Dorsolateral prefrontal cortex (tissue), 120 donors: ENCODE measurements at regions of chr10 and their contacts with region 1.

Region 1: DNA sequence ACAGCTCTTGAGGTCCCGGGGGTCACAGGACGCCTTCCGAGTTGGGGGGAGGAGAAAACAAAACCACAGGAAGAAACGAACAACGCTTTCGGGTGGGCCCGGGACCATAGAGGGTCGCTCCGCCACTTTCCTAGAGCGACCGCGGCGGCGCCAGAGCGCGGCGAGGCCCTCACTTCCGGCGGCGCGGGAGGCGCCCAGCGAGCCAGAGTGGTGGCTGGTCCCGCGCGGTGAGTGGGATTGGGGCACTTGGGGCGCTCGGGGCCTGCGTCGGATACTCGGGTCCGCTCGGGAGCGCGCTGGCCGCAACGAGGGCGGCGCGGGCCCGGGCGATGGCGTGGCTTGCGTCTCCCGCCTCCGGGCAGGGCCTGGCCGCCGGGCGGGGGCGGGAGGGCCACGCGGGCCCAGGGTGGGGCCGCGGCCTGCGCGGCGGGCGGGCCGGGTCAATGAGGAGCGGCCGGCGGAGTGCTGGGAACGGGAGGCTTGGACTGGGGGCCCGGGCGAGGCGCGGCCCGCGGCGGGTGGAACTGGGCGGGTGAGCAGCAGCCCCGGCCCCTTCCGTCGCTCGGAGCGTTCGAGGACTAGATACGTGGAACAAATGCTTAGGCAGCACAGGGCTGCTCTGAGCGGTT is at the start of gene ZNF22:
- DNase-seq: peak in 6 of 10 donors; percentile 58 to 82 (median 68)
- H3K4me3 ChIP-seq: peak within 1 kb of the TSS; percentile 48 to 84 (median 74)
- H3K27ac ChIP-seq: peak within 1 kb of the TSS; percentile 39 to 98 (median 88)
- H3K27me3 ChIP-seq: no peaks in the 10 kb centered on the region
- CTCF ChIP-seq: peak in 35 of 56 donors; percentile 12 to 46 (median 29)
- total RNA-seq, gene ZNF22: 9.2 to 20.9 (median 14.1) TPM

Region 2: DNA sequence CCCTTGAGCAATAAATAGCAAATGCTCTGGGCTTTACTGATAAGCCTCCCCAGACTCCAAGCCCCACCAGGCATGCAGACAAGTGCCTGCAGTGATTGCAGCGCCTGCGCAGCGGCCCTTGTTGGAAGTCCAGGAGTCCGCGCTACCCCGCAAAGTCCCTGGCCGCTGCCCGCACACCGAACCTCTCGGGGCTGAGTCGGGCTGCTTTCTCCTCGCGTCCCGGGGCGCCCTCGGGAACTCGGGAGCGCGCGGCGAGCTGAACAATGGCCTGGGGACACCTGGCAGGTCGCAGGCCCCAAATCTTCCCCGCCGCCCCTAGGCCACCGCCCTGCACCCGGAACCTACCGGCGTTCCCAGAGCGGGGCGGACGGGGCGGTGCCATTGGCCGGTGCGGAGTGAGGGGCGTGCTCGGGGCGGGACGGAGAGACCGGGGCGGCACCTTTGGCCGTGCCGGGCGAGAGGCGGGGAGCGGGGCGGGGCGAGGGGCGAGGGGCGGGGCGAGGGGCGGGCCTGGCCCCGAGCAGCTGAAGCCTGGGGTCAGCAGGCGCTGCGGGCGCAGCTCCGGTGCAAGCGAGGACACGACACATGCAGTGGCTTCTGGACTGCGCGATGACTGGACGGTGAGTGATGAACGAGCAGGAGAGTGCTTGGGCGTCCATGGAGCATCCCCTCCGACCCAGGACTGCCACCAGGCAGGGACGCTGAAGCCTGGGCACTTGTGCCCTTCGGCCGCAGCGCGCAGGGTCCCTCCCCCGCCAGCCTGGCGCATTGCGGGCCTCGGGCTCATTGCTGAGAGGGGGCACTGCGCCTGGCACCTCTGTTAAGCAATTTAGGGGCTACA is 41.4 kb before region 1 on chr10 and contains the start of gene RASSF4:
- intact Hi-C with region 1: loop called in 1 of 2 experiments (anchors 2 kb)
- DNase-seq: peak; percentile 79 to 97 (median 87)
- H3K4me3 ChIP-seq: peak within 1 kb of the TSS; percentile 60 to 99 (median 90)
- H3K27ac ChIP-seq: peak within 1 kb of the TSS; percentile 59 to 99 (median 97)
- H3K27me3 ChIP-seq: no peaks in the 10 kb centered on the region
- CTCF ChIP-seq: peak in 20 of 56 donors; percentile 3 to 51 (median 15)
- total RNA-seq, gene RASSF4: 54.6 to 175 (median 111) TPM

Region 3: DNA sequence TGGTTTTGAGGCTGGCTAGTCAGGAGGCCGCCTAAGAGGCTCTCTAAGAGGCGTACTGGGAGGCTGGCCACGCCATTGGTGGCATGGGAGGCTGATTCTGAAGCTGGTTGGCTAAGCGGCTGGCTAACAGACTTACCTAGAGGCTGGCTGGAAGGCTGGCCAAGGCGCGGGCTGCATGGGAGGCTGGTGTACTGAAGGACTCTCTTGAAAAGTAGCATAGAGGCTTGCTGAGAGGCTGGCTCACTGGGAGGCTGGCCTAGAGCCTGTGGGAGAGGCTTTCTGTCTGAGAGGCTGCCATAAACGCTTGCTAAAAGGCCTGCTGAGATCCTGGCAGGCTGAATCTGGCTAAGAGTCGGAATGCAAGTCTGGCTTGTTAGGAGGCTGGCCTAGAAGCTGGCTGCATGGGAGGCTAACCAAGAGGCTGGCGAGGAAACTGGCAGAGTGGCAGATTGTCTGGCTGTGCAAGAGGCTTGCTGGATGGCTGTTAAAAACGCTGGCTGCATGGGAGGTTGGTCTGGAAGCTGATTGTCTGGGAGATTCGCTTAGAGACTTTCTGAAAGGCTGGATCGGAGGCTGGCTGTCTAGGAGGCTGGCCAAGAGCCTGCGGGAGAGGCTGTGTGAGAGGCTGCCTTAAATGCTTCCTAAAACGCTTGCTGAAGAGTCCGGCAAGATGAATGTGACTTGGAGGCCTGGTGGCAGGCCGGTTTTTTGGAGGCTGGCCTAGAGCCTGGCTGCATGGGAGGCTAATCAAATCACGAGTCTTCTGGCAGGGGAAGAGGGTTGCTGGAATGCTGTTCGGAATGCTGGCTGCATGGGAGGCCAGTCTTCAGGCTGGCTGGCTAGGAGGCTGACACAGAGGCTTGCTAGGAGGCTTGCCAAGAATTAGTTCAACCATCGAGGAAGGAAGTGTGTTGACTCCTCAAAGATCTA is 180.3 kb after region 1 on chr10:
- intact Hi-C with region 1: no loop called
- DNase-seq: peak in 1 of 10 donors; percentile 62
- H3K4me3 ChIP-seq: no peak overlapping the region
- H3K27ac ChIP-seq: no peak overlapping the region
- H3K27me3 ChIP-seq: no peaks in the 10 kb centered on the region
- CTCF ChIP-seq: no peak

Region 4: DNA sequence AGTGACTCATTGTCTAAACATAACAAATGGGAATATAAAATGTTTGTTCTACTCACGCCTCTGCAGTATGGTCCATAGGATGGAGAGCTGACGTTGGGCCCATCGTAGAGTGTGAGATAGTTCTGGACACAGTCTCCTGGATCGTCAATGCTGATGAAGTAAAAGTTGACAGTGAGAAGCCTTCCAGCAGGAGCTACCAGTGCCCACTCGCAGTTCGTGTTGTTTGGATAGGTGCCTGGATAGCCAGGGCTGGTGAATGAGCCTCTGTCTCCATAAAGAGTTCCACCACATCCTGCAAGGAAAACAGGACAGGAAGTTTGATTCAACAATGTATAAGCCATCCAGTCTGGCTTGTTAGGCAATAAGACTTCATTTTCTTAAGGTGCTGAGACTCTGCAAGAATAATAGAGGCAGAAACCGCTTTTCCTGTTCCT is 234.9 kb after region 1 on chr10:
- intact Hi-C with region 1: no loop called
- DNase-seq: peak in 3 of 10 donors; percentile 19 to 47 (median 42)
- H3K4me3 ChIP-seq: no peak overlapping the region
- H3K27ac ChIP-seq: peak overlapping the region in 3 of 59 donors; percentile 38 to 39 (median 39)
- H3K27me3 ChIP-seq: no peaks in the 10 kb centered on the region
- CTCF ChIP-seq: no peak